ENCODE measurements at regions of chr18 and their contacts with region 1.

Region 1: GRCh38 chr18:51437280-51438271 is 240.1 kb upstream of the MEX3C start:
- DNase-seq: no peak
- ATAC-seq: no peak
- H3K4me3 ChIP-seq: no peak overlapping the region
- H3K4me3 Mint-ChIP-seq: no peak overlapping the region
- H3K27ac ChIP-seq: no peak overlapping the region
- H3K27ac Mint-ChIP-seq: no peak overlapping the region
- H3K4me1 ChIP-seq: no peaks in the 10 kb centered on the region
- H3K4me1 Mint-ChIP-seq: no peaks in the 10 kb centered on the region
- H3K27me3 ChIP-seq: peaks cover 0 to 3% of the 10 kb centered on the region in 2 experiments
- H3K27me3 Mint-ChIP-seq: peaks cover 19% of the 10 kb centered on the region
- CTCF ChIP-seq: no peak

Region 2: GRCh38 chr18:50992351-50992762 is 445.2 kb before region 1 on chr18:
- CTCF ChIA-PET with region 1: no interaction called
- POLR2A ChIA-PET with region 1: no interaction called
- intact Hi-C with region 1: no loop called
- DNase-seq: no peak
- ATAC-seq: no peak
- H3K4me3 ChIP-seq: no peak overlapping the region
- H3K4me3 Mint-ChIP-seq: no peak overlapping the region
- H3K27ac ChIP-seq: no peak overlapping the region
- H3K27ac Mint-ChIP-seq: no peak overlapping the region
- H3K4me1 ChIP-seq: no peaks in the 10 kb centered on the region
- H3K4me1 Mint-ChIP-seq: no peaks in the 10 kb centered on the region
- H3K27me3 ChIP-seq: no peaks in the 10 kb centered on the region
- H3K27me3 Mint-ChIP-seq: no peaks in the 10 kb centered on the region
- CTCF ChIP-seq: no peak

Region 3: DNA sequence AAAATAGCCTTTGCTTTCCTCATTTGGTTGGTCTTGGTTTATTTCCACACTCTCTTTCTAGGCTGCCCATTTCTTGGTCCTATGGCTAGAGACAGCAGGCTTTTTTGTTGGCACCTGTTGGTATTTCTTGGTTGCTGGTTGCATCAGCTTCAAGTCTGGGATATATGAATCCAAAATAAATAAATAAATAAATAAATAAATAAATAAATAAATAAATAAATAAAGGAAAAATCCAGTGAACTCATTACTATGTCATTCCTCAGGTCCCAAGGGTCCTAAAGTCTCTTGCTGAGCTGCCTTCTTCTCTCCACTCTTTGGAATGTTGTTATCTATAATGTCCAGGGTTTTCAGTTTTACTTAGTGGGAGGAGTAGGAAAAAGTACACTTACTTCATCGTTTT is 74.2 kb before region 1 on chr18:
- CTCF ChIA-PET with region 1: no interaction called
- POLR2A ChIA-PET with region 1: no interaction called
- intact Hi-C with region 1: loop called in 1 of 2 experiments (anchors 2 kb)
- DNase-seq: no peak
- ATAC-seq: no peak
- H3K4me3 ChIP-seq: no peak overlapping the region
- H3K4me3 Mint-ChIP-seq: no peak overlapping the region
- H3K27ac ChIP-seq: no peak overlapping the region
- H3K27ac Mint-ChIP-seq: no peak overlapping the region
- H3K4me1 ChIP-seq: no peaks in the 10 kb centered on the region
- H3K4me1 Mint-ChIP-seq: peaks cover 5% of the 10 kb centered on the region
- H3K27me3 ChIP-seq: no peaks in the 10 kb centered on the region
- H3K27me3 Mint-ChIP-seq: peaks cover 10% of the 10 kb centered on the region
- CTCF ChIP-seq: no peak

Region 4: GRCh38 chr18:51390702-51391101 is 46.9 kb before region 1 on chr18:
- CTCF ChIA-PET with region 1: no interaction called
- POLR2A ChIA-PET with region 1: interaction called, 3 read pairs
- intact Hi-C with region 1: loop called in 1 of 2 experiments (anchors 2 kb)
- DNase-seq: no peak
- ATAC-seq: no peak
- H3K4me3 ChIP-seq: no peak overlapping the region
- H3K4me3 Mint-ChIP-seq: no peak overlapping the region
- H3K27ac ChIP-seq: no peak overlapping the region
- H3K27ac Mint-ChIP-seq: no peak overlapping the region
- H3K4me1 ChIP-seq: no peaks in the 10 kb centered on the region
- H3K4me1 Mint-ChIP-seq: no peaks in the 10 kb centered on the region
- H3K27me3 ChIP-seq: no peaks in the 10 kb centered on the region
- H3K27me3 Mint-ChIP-seq: peaks cover 14% of the 10 kb centered on the region
- CTCF ChIP-seq: no peak

Region 5: DNA sequence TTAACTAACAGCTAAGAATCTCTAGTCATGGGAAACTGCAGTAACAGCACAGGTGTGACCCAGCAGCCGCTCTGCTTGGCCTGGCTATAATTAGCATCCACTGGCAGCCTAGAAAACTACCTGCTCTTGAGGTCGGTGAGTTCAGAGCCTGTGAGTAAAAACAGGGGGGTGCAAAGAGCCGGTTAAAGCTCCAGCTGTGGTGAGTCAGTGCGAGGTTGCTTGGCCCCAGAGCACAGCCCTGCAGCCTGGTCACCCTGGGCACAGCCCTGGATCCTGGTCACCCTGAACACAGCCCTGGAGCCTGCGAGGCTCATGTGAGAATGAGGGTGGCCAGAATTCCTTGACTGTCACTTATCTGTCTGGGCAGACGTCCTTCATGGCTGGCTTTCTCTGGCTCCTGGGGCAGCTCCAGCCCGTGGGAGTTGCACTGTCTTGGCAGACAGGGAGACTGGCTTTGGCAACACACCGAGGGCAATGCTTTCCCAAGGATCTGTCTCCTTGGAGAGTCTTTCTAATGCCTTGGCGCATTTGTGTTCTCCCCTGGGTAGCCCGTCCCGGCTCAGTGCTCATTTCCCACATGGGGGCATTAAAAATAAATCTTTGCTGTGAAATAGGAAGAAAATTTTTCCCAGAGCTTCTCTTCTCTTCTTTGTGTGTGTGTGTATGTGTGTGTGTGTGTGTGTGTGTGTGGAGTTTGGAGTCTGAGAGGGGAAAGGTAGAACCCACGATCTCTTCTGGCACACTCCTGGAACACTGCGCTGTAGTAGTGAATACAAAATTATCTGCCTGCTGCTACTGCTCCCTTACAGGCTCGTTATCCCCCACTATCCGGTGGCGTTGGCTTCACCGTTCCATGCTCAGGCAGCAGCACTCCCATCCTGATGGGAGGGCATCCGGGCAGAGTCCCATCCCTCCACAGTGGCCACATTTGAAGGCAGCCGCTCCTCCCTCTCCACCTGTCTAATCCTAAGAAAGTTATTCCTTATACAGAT is 10.1 kb after region 1 on chr18:
- CTCF ChIA-PET with region 1: no interaction called
- POLR2A ChIA-PET with region 1: no interaction called
- intact Hi-C with region 1: no loop called
- DNase-seq: no peak
- ATAC-seq: no peak
- H3K4me3 ChIP-seq: no peak overlapping the region
- H3K4me3 Mint-ChIP-seq: no peak overlapping the region
- H3K27ac ChIP-seq: no peak overlapping the region
- H3K27ac Mint-ChIP-seq: no peak overlapping the region
- H3K4me1 ChIP-seq: no peaks in the 10 kb centered on the region
- H3K4me1 Mint-ChIP-seq: no peaks in the 10 kb centered on the region
- H3K27me3 ChIP-seq: no peaks in the 10 kb centered on the region
- H3K27me3 Mint-ChIP-seq: peaks cover 21% of the 10 kb centered on the region
- CTCF ChIP-seq: no peak

Region 6: GRCh38 chr18:51537487-51537886 is 99.9 kb after region 1 on chr18:
- CTCF ChIA-PET with region 1: no interaction called
- POLR2A ChIA-PET with region 1: no interaction called
- intact Hi-C with region 1: no loop called
- DNase-seq: peak in 3 of 9 experiments; percentile 5 to 23 (median 11)
- ATAC-seq: no peak
- H3K4me3 ChIP-seq: no peak overlapping the region
- H3K4me3 Mint-ChIP-seq: no peak overlapping the region
- H3K27ac ChIP-seq: no peak overlapping the region
- H3K27ac Mint-ChIP-seq: no peak overlapping the region
- H3K4me1 ChIP-seq: no peaks in the 10 kb centered on the region
- H3K4me1 Mint-ChIP-seq: no peaks in the 10 kb centered on the region
- H3K27me3 ChIP-seq: peaks cover 0 to 2% of the 10 kb centered on the region in 2 experiments
- H3K27me3 Mint-ChIP-seq: peaks cover 4% of the 10 kb centered on the region
- CTCF ChIP-seq: no peak

Measured in CD8-positive, alpha-beta T cell (primary cell).